A549 (cell line): ENCODE measurements at regions of chr12 and their contacts with region 1.

Region 1: GRCh38 chr12:47949441-47950308 is 13.7 kb upstream of the TMEM106C start:
- DNase-seq: peak; percentile 88 to 90
- ATAC-seq: peak; percentile 88 to 98
- H3K4me3 ChIP-seq: no peak overlapping the region
- H3K27ac ChIP-seq: peak overlapping the region in 1 of 2 experiments; percentile 36; a peak in 2 of 6 replicates
- H3K4me1 ChIP-seq: peaks cover 19% of the 10 kb centered on the region
- CTCF ChIP-seq: peak; percentile 86
- EP300 ChIP-seq: no peak
- POLR2A ChIP-seq: no peak
- RAD21 ChIP-seq: peak; percentile 79 to 84

Region 2: DNA sequence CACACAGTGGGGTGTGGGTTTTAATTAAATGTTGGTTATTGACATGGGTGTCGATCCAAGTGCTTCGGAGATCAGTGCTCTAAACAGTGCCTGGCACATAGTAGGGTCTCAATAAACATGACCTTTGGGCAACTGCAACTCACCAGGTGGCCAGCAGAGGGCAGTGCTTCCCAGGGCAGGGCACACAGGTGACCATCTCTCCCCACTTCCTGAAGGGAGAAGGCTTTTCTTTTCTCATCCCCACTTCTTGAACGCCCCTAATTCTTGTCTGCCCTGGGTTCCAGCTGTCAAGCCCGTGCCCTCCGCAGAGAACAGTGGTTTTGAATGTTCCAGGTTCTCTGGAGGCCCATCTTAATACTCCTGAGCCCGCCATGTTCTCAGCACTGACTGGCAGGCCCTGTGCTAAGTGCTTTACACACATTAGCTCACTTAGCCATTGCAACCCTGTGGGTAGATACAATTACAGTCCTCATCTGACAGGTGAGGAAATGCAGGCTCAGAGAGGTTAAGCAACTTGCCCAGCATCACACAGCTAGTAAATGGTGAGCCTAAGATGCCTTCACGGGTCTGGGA is 207.3 kb before region 1 on chr12:
- CTCF ChIA-PET with region 1: interaction called, 21 read pairs
- POLR2A ChIA-PET with region 1: no interaction called
- DNase-seq: peak; percentile 63 to 67
- ATAC-seq: peak; percentile 12 to 75; a peak in 3 of 6 replicates
- H3K4me3 ChIP-seq: no peak overlapping the region
- H3K27ac ChIP-seq: no peak overlapping the region
- H3K4me1 ChIP-seq: peaks cover 8% of the 10 kb centered on the region
- CTCF ChIP-seq: peak; percentile 98
- EP300 ChIP-seq: no peak
- POLR2A ChIP-seq: no peak
- RAD21 ChIP-seq: peak; percentile 93 to 97

Region 3: DNA sequence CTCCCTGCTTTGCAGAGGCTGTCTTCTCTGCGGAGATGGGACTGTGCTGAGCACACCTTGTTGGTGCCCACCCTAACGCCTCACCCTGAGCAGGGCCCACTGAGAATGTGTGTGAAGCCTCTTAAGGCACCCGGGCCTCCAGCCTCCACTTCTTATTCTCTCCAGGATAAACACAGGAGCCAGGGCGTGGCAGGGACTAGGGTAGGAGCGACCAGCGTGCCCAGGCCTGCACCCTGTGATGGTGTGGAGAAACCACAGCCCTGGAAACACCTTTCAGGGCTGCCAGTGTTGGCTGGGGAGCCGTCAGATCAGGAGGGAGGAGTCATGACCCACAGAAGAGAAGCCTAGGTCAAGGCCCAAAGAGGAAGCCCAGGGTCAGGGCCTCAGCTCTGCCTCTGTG is 86.2 kb before region 1 on chr12:
- CTCF ChIA-PET with region 1: interaction called, 12 read pairs
- POLR2A ChIA-PET with region 1: no interaction called
- DNase-seq: no peak
- ATAC-seq: no peak
- H3K4me3 ChIP-seq: no peak overlapping the region
- H3K27ac ChIP-seq: no peak overlapping the region
- H3K4me1 ChIP-seq: no peaks in the 10 kb centered on the region
- CTCF ChIP-seq: no peak
- EP300 ChIP-seq: no peak
- POLR2A ChIP-seq: no peak
- RAD21 ChIP-seq: no peak

Region 4: GRCh38 chr12:47892819-47893218 is 56.9 kb before region 1 on chr12:
- CTCF ChIA-PET with region 1: interaction called, 10 read pairs
- POLR2A ChIA-PET with region 1: no interaction called
- DNase-seq: no peak
- ATAC-seq: no peak
- H3K4me3 ChIP-seq: no peak overlapping the region
- H3K27ac ChIP-seq: no peak overlapping the region
- H3K4me1 ChIP-seq: peaks cover 8% of the 10 kb centered on the region; the same call in 2 of the 3 replicates
- CTCF ChIP-seq: no peak
- EP300 ChIP-seq: no peak
- POLR2A ChIP-seq: no peak
- RAD21 ChIP-seq: no peak

Region 5: GRCh38 chr12:47927346-47927745 is 22.3 kb before region 1 on chr12:
- CTCF ChIA-PET with region 1: interaction called, 11 read pairs
- POLR2A ChIA-PET with region 1: no interaction called
- DNase-seq: no peak
- ATAC-seq: no peak
- H3K4me3 ChIP-seq: no peak overlapping the region
- H3K27ac ChIP-seq: no peak overlapping the region
- H3K4me1 ChIP-seq: no peaks in the 10 kb centered on the region
- CTCF ChIP-seq: no peak
- EP300 ChIP-seq: no peak
- POLR2A ChIP-seq: no peak
- RAD21 ChIP-seq: no peak

Region 6: GRCh38 chr12:47963340-47964040 is 13.8 kb after region 1 on chr12 and contains the start of gene TMEM106C:
- CTCF ChIA-PET with region 1: interaction called, 30 read pairs
- POLR2A ChIA-PET with region 1: interaction called, 3 read pairs
- DNase-seq: peak; percentile 91 to 97
- ATAC-seq: peak; percentile 92 to 98
- H3K4me3 ChIP-seq: peak within 1 kb of the TSS; percentile 91
- H3K27ac ChIP-seq: peak within 1 kb of the TSS; percentile 85 to 91
- H3K4me1 ChIP-seq: peaks cover 4% of the 10 kb centered on the region; the same call in 1 of the 3 replicates
- CTCF ChIP-seq: peak; percentile 92
- EP300 ChIP-seq: no peak
- POLR2A ChIP-seq: peak; percentile 60
- RAD21 ChIP-seq: peak; percentile 60 to 62; a peak in 4 of 5 replicates
- polyA plus RNA-seq, gene TMEM106C: 236 and 331 TPM in 2 replicates

Region 7: GRCh38 chr12:48216785-48217184 is 267.1 kb after region 1 on chr12:
- CTCF ChIA-PET with region 1: no interaction called
- POLR2A ChIA-PET with region 1: no interaction called
- DNase-seq: no peak
- ATAC-seq: no peak
- H3K4me3 ChIP-seq: no peak overlapping the region
- H3K27ac ChIP-seq: no peak overlapping the region
- H3K4me1 ChIP-seq: no peaks in the 10 kb centered on the region
- CTCF ChIP-seq: no peak
- EP300 ChIP-seq: no peak
- POLR2A ChIP-seq: no peak
- RAD21 ChIP-seq: no peak